ENCODE measurements at regions of chr16 and their contacts with region 1.

Region 1: GRCh38 chr16:13231365-13231764 is 330.0 kb downstream of the SHISA9 start:
- DNase-seq: no peak
- H3K4me3 ChIP-seq: no peak overlapping the region
- H3K27ac ChIP-seq: no peak overlapping the region
- H3K4me1 ChIP-seq: no peaks in the 10 kb centered on the region
- H3K27me3 ChIP-seq: no peaks in the 10 kb centered on the region
- CTCF ChIP-seq: no peak
- EP300 ChIP-seq: no peak
- POLR2A ChIP-seq: no peak

Region 2: DNA sequence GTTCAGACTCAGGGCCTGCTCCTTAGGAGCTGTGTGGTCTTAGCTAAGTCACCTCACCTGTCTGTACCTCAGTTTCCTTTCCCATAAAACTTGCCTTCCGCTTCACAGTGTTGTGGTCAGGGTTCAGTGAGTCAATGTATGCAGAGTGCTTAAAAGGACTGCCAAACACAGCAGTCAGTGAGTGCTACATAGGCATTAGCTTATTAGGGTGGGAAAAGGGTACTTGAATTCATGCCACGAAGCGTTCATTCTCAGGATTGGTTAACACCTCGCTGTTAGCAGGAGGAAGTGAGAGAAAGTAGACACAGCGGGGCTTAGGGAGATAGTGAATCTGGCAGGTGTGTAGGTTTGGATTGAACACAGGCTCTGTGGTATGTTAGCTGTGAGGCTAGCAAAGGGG is 174.8 kb before region 1 on chr16:
- in situ Hi-C with region 1: no loop called
- intact Hi-C with region 1: no loop called
- DNase-seq: no peak
- H3K4me3 ChIP-seq: no peak overlapping the region
- H3K27ac ChIP-seq: no peak overlapping the region
- H3K4me1 ChIP-seq: no peaks in the 10 kb centered on the region
- H3K27me3 ChIP-seq: no peaks in the 10 kb centered on the region
- CTCF ChIP-seq: no peak
- EP300 ChIP-seq: no peak
- POLR2A ChIP-seq: no peak

Region 3: GRCh38 chr16:13331919-13332318 is 100.6 kb after region 1 on chr16:
- in situ Hi-C with region 1: loop called in 1 of 4 experiments (anchors 25 kb)
- intact Hi-C with region 1: no loop called
- DNase-seq: no peak
- H3K4me3 ChIP-seq: no peak overlapping the region
- H3K27ac ChIP-seq: no peak overlapping the region
- H3K4me1 ChIP-seq: no peaks in the 10 kb centered on the region
- H3K27me3 ChIP-seq: no peaks in the 10 kb centered on the region
- CTCF ChIP-seq: no peak
- EP300 ChIP-seq: no peak
- POLR2A ChIP-seq: no peak